K562 (cell line): ENCODE measurements at regions of chr6 and their contacts with region 1.

Region 1: GRCh38 chr6:53280207-53280606 is 68.5 kb downstream of the ELOVL5 start:
- DNase-seq: no peak
- ATAC-seq: no peak
- H3K4me3 ChIP-seq: no peak overlapping the region
- H3K27ac ChIP-seq: no peak overlapping the region
- H3K4me1 ChIP-seq: no peaks in the 10 kb centered on the region
- H3K27me3 ChIP-seq: no peaks in the 10 kb centered on the region
- CTCF ChIP-seq: no peak
- EP300 ChIP-seq: no peak
- POLR2A ChIP-seq: no peak
- RAD21 ChIP-seq: no peak

Region 2: DNA sequence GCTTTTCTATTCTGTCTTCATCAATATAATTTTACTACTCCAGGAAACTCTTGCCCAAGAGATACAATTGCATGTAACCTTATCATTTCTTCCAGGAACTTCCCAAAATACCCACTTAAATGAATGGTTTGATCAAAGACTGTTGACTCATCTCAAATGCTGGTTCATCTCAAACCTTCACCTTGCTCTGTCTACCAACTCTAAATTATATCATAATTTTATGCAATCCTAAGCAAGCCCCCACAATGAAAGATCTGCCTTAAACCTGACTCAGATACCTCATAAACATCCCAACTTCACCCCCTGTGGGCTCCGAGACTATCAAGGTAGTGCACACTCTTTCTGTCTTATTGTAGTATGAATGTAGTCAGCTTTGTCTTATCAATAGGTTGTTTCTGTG is 66.0 kb before region 1 on chr6:
- CTCF ChIA-PET with region 1: no interaction called
- POLR2A ChIA-PET with region 1: no interaction called
- in situ Hi-C with region 1: no loop called
- intact Hi-C with region 1: no loop called
- DNase-seq: no peak
- ATAC-seq: no peak
- H3K4me3 ChIP-seq: no peak overlapping the region
- H3K27ac ChIP-seq: no peak overlapping the region
- H3K4me1 ChIP-seq: no peaks in the 10 kb centered on the region; a peak in 1 of 5 replicates
- H3K27me3 ChIP-seq: no peaks in the 10 kb centered on the region
- CTCF ChIP-seq: no peak
- EP300 ChIP-seq: no peak
- POLR2A ChIP-seq: no peak
- RAD21 ChIP-seq: no peak

Region 3: GRCh38 chr6:53294095-53294494 is 13.9 kb after region 1 on chr6:
- CTCF ChIA-PET with region 1: no interaction called
- POLR2A ChIA-PET with region 1: interaction called, 10 read pairs
- in situ Hi-C with region 1: no loop called
- intact Hi-C with region 1: no loop called
- DNase-seq: peak in 1 of 4 experiments; percentile 25
- ATAC-seq: peak; percentile 49; the same call in 2 of the 3 replicates
- H3K4me3 ChIP-seq: no peak overlapping the region
- H3K27ac ChIP-seq: no peak overlapping the region
- H3K4me1 ChIP-seq: peaks cover 0 to 31% of the 10 kb centered on the region in 2 experiments; a peak in 3 of 5 replicates
- H3K27me3 ChIP-seq: no peaks in the 10 kb centered on the region
- CTCF ChIP-seq: peak; percentile 47 to 72 (median 56)
- EP300 ChIP-seq: no peak
- POLR2A ChIP-seq: no peak
- RAD21 ChIP-seq: no peak

Region 4: GRCh38 chr6:53410508-53411258 is 130.5 kb after region 1 on chr6:
- CTCF ChIA-PET with region 1: no interaction called
- POLR2A ChIA-PET with region 1: no interaction called
- in situ Hi-C with region 1: no loop called
- intact Hi-C with region 1: loop called (anchors 5 kb)
- DNase-seq: peak; percentile 23 to 74 (median 52)
- ATAC-seq: peak; percentile 99
- H3K4me3 ChIP-seq: no peak overlapping the region
- H3K27ac ChIP-seq: no peak overlapping the region
- H3K4me1 ChIP-seq: no peaks in the 10 kb centered on the region; a peak in 1 of 5 replicates
- H3K27me3 ChIP-seq: peaks cover 4 to 9% of the 10 kb centered on the region in 2 experiments; a peak in 3 of 5 replicates
- CTCF ChIP-seq: peak; percentile 84 to 88 (median 86)
- EP300 ChIP-seq: peak; percentile 36; the same call in 1 of the 2 replicates
- POLR2A ChIP-seq: no peak
- RAD21 ChIP-seq: peak; percentile 87 to 96